GM12878 (cell line): ENCODE measurements at regions of chr11 and their contacts with region 1.

Region 1: GRCh38 chr11:39374963-39375698 is 2084.3 kb downstream of the LRRC4C start:
- DNase-seq: no peak
- ATAC-seq: peak; percentile 52
- H3K4me3 ChIP-seq: no peak overlapping the region
- H3K27ac ChIP-seq: no peak overlapping the region
- H3K4me1 ChIP-seq: no peaks in the 10 kb centered on the region
- H3K27me3 ChIP-seq: no peaks in the 10 kb centered on the region
- CTCF ChIP-seq: peak; percentile 37 to 49 (median 46); a peak in 5 of 6 replicates
- EP300 ChIP-seq: no peak
- POLR2A ChIP-seq: no peak
- RAD21 ChIP-seq: 0 out of 2 replicates have a peak, but pooled peaks have one; percentile 23

Region 2: DNA sequence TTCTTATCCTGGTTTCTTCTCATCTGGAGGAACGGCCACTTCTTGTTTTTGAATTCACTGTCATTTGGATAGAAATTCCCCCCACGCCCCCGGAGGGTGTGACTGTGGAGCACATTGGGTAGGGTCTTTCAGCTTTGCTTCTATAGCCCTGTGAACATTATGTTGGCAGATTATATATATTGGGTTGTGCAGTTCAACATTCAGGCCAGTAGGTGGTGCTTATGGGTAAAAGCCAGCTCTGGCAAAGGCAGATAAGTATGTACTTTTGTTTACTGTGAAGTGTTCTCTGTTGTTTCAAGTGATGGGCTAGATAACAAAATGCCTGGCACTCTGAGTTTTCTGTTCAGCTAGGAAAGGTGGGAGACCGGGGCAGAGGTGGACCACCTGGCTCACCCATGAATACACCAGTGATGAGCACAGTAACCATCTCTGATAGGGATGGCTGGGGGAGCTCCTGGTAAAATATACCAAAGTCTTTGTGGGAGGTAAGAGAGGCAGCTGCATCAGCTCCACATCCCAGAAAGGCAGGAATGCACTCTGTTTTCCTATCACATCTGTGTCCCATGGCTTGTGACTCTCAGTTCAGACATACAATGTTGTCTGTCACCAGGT is 1428.9 kb before region 1 on chr11:
- CTCF ChIA-PET with region 1: no interaction called
- POLR2A ChIA-PET with region 1: no interaction called
- RAD21 ChIA-PET with region 1: no interaction called
- SMC1A ChIA-PET with region 1: no interaction called
- in situ Hi-C with region 1: no loop called
- intact Hi-C with region 1: loop called (anchors 10 kb)
- DNase-seq: peak; percentile 7
- ATAC-seq: peak; percentile 87
- H3K4me3 ChIP-seq: no peak overlapping the region
- H3K27ac ChIP-seq: no peak overlapping the region
- H3K4me1 ChIP-seq: no peaks in the 10 kb centered on the region
- H3K27me3 ChIP-seq: no peaks in the 10 kb centered on the region
- CTCF ChIP-seq: peak; percentile 61 to 68 (median 65)
- EP300 ChIP-seq: no peak
- POLR2A ChIP-seq: no peak
- RAD21 ChIP-seq: peak; percentile 40; the same call in 1 of the 2 replicates

Region 3: GRCh38 chr11:39304586-39304985 is 70.5 kb before region 1 on chr11:
- CTCF ChIA-PET with region 1: no interaction called
- POLR2A ChIA-PET with region 1: no interaction called
- RAD21 ChIA-PET with region 1: no interaction called
- SMC1A ChIA-PET with region 1: no interaction called
- in situ Hi-C with region 1: no loop called
- intact Hi-C with region 1: no loop called
- DNase-seq: no peak
- ATAC-seq: no peak
- H3K4me3 ChIP-seq: no peak overlapping the region
- H3K27ac ChIP-seq: no peak overlapping the region
- H3K4me1 ChIP-seq: no peaks in the 10 kb centered on the region
- H3K27me3 ChIP-seq: no peaks in the 10 kb centered on the region
- CTCF ChIP-seq: no peak
- EP300 ChIP-seq: no peak
- POLR2A ChIP-seq: no peak
- RAD21 ChIP-seq: no peak

Region 4: GRCh38 chr11:39385911-39386310 is 10.8 kb after region 1 on chr11:
- CTCF ChIA-PET with region 1: interaction called, 10 read pairs
- POLR2A ChIA-PET with region 1: no interaction called
- RAD21 ChIA-PET with region 1: no interaction called
- SMC1A ChIA-PET with region 1: no interaction called
- in situ Hi-C with region 1: no loop called
- intact Hi-C with region 1: no loop called
- DNase-seq: no peak
- ATAC-seq: no peak
- H3K4me3 ChIP-seq: no peak overlapping the region
- H3K27ac ChIP-seq: no peak overlapping the region
- H3K4me1 ChIP-seq: no peaks in the 10 kb centered on the region
- H3K27me3 ChIP-seq: no peaks in the 10 kb centered on the region
- CTCF ChIP-seq: no peak
- EP300 ChIP-seq: no peak
- POLR2A ChIP-seq: no peak
- RAD21 ChIP-seq: no peak

Region 5: DNA sequence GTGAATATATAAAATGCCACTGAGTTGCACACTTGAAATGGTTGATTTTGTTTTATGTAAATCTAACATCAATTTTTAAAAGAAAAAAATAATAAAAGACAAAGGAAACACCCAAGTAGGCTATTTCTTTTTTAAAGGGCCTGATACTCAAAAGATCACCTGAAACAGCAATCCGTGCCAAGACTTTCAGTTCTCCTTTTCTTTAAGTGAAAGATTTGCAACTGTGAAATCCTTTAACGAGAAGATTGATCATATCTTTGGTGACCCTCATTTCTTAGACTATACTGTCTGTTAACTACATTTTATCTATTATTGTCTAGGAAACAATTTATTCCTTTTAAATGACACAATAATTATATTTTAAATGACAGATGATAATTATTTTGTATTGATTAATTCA is 242.8 kb after region 1 on chr11:
- CTCF ChIA-PET with region 1: no interaction called
- POLR2A ChIA-PET with region 1: no interaction called
- RAD21 ChIA-PET with region 1: no interaction called
- SMC1A ChIA-PET with region 1: no interaction called
- in situ Hi-C with region 1: no loop called
- intact Hi-C with region 1: no loop called
- DNase-seq: no peak
- ATAC-seq: no peak
- H3K4me3 ChIP-seq: no peak overlapping the region
- H3K27ac ChIP-seq: no peak overlapping the region
- H3K4me1 ChIP-seq: no peaks in the 10 kb centered on the region
- H3K27me3 ChIP-seq: no peaks in the 10 kb centered on the region
- CTCF ChIP-seq: no peak
- EP300 ChIP-seq: no peak
- POLR2A ChIP-seq: no peak
- RAD21 ChIP-seq: no peak